Activated naive CD4-positive, alpha-beta T cell treated with anti-CD3 and anti-CD28 coated beads for 36 hours (primary cell): ENCODE measurements at regions of chr1 and their contacts with region 1.

Region 1: GRCh38 chr1:91754348-91754747 is 131.6 kb downstream of the TGFBR3 start:
- DNase-seq: peak; percentile 81
- H3K4me3 Mint-ChIP-seq: no peak overlapping the region
- H3K27ac Mint-ChIP-seq: peak overlapping the region; percentile 70
- H3K4me1 Mint-ChIP-seq: peaks cover 37% of the 10 kb centered on the region
- H3K27me3 Mint-ChIP-seq: peaks cover 4% of the 10 kb centered on the region

Region 2: GRCh38 chr1:89855413-89856123 is 1898.8 kb before region 1 on chr1:
- CTCF ChIA-PET with region 1: no interaction called
- intact Hi-C with region 1: loop called (anchors 1 kb)
- DNase-seq: no peak
- H3K4me3 Mint-ChIP-seq: peak overlapping the region; percentile 44
- H3K27ac Mint-ChIP-seq: no peak overlapping the region
- H3K4me1 Mint-ChIP-seq: peaks cover 11% of the 10 kb centered on the region
- H3K27me3 Mint-ChIP-seq: no peaks in the 10 kb centered on the region

Region 3: DNA sequence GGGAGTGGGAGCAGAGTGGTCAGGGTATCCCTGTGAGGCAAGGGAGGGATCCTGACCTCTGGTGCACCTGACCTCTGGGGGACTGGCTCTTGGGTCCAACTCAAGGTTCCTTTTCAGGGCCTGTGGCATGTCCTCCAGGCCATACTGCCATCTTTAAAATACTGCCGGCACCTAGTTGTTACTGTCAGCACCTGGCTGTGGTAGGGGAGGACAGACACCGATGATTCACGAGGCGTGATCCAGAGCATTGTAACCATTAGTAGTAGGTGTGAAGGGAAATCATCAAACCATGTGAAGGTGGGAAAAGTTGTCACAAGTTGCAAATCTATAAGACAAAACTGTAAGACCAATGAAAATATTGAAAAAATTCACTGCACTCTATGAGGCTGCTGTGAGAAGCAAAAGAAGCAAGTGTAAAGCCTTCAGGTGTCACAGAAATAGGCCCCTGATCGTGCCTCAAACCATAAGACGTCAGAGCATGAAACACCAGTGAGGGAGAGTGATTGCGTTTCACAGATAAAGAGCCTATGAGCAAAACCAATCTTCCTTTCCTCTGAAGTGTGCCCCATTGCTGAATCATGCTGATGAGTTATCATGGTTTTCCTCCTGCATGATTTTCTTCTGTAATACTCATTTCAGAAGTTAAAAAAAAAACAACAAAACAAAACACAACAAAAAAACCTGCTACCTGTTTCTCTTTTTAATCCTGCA is 198.4 kb before region 1 on chr1:
- CTCF ChIA-PET with region 1: no interaction called
- intact Hi-C with region 1: loop called (anchors 1 kb)
- DNase-seq: peak; percentile 84
- H3K4me3 Mint-ChIP-seq: peak overlapping the region; percentile 26
- H3K27ac Mint-ChIP-seq: peak overlapping the region; percentile 90
- H3K4me1 Mint-ChIP-seq: peaks cover 68% of the 10 kb centered on the region
- H3K27me3 Mint-ChIP-seq: no peaks in the 10 kb centered on the region

Region 4: GRCh38 chr1:91697416-91697815 is 56.9 kb before region 1 on chr1:
- CTCF ChIA-PET with region 1: no interaction called
- intact Hi-C with region 1: loop called (anchors 1 kb)
- DNase-seq: peak; percentile 77
- H3K4me3 Mint-ChIP-seq: peak overlapping the region; percentile 30
- H3K27ac Mint-ChIP-seq: peak overlapping the region; percentile 51
- H3K4me1 Mint-ChIP-seq: peaks cover 28% of the 10 kb centered on the region
- H3K27me3 Mint-ChIP-seq: no peaks in the 10 kb centered on the region

Region 5: DNA sequence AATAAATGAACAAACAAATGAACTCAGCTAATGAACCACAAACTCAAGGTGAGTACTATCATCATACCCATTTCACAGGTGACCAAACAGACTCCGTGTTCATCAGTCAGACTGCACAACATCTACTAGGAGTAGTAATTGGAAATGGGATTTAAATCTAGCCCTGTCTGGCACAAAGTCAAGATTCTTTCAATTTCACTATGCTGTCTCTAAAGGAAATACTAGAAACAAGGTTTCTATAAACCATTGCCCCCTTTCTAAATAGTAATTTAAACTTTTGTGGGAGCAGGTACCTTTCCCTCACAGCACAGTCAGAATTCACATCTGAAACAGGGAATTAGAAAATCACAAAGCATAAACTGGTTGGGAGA is 28.7 kb before region 1 on chr1:
- CTCF ChIA-PET with region 1: no interaction called
- intact Hi-C with region 1: no loop called
- DNase-seq: no peak
- H3K4me3 Mint-ChIP-seq: no peak overlapping the region
- H3K27ac Mint-ChIP-seq: no peak overlapping the region
- H3K4me1 Mint-ChIP-seq: peaks cover 6% of the 10 kb centered on the region
- H3K27me3 Mint-ChIP-seq: no peaks in the 10 kb centered on the region

Region 6: DNA sequence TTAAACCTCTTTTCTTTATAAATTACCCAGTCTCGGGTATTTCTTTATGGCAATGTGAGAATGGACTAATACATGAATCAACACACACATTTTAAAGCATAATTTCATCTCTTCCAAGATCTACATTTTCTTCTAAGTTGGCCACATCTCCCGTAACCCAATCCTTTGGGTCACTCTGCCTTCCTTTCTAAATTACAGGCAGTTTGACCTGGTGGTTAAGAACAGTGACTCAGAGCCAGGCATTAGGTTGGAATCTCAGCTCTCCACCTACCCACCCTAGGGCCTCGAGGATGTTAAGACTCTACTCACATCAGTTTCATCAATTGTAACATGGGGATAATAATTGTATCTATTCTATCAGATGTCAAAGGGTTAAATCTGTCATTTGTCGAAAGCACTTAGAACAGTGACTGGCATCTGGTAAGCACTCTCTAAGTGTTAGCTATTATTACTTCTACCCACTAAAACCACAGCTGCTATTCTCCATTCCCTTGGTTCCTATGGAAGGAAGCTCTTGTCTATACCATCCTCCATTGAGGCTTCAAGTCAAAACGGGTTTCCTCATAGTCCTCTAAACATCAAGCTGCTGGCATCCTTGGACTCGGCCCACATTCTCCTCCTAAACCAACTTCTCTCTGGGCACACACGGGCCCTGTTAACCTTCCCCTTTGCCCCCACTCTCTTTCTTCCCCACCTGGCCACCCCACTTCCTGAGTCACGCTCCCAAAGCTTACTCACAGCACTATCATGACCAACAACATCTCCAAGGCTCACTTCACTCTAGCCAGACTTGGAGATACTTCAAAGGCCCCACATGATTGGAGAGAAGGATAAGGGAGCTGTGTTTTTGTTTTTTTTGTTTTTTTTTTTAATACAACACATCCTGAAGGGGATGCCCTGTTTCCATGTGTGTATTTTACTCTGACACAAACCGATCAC is 14.7 kb after region 1 on chr1:
- CTCF ChIA-PET with region 1: no interaction called
- intact Hi-C with region 1: no loop called
- DNase-seq: no peak
- H3K4me3 Mint-ChIP-seq: no peak overlapping the region
- H3K27ac Mint-ChIP-seq: no peak overlapping the region
- H3K4me1 Mint-ChIP-seq: no peaks in the 10 kb centered on the region
- H3K27me3 Mint-ChIP-seq: no peaks in the 10 kb centered on the region

Region 7: GRCh38 chr1:91803847-91804545 is 49.6 kb after region 1 on chr1:
- CTCF ChIA-PET with region 1: interaction called, 3 read pairs
- intact Hi-C with region 1: loop called (anchors 1 kb)
- DNase-seq: peak; percentile 92
- H3K4me3 Mint-ChIP-seq: peak overlapping the region; percentile 60
- H3K27ac Mint-ChIP-seq: peak overlapping the region; percentile 98
- H3K4me1 Mint-ChIP-seq: peaks cover 31% of the 10 kb centered on the region
- H3K27me3 Mint-ChIP-seq: no peaks in the 10 kb centered on the region

Region 8: GRCh38 chr1:91948501-91949355 is 194.4 kb after region 1 on chr1:
- CTCF ChIA-PET with region 1: no interaction called
- intact Hi-C with region 1: no loop called
- DNase-seq: peak; percentile 50
- H3K4me3 Mint-ChIP-seq: peak overlapping the region; percentile 25
- H3K27ac Mint-ChIP-seq: no peak overlapping the region
- H3K4me1 Mint-ChIP-seq: peaks cover 13% of the 10 kb centered on the region
- H3K27me3 Mint-ChIP-seq: no peaks in the 10 kb centered on the region

Region 9: DNA sequence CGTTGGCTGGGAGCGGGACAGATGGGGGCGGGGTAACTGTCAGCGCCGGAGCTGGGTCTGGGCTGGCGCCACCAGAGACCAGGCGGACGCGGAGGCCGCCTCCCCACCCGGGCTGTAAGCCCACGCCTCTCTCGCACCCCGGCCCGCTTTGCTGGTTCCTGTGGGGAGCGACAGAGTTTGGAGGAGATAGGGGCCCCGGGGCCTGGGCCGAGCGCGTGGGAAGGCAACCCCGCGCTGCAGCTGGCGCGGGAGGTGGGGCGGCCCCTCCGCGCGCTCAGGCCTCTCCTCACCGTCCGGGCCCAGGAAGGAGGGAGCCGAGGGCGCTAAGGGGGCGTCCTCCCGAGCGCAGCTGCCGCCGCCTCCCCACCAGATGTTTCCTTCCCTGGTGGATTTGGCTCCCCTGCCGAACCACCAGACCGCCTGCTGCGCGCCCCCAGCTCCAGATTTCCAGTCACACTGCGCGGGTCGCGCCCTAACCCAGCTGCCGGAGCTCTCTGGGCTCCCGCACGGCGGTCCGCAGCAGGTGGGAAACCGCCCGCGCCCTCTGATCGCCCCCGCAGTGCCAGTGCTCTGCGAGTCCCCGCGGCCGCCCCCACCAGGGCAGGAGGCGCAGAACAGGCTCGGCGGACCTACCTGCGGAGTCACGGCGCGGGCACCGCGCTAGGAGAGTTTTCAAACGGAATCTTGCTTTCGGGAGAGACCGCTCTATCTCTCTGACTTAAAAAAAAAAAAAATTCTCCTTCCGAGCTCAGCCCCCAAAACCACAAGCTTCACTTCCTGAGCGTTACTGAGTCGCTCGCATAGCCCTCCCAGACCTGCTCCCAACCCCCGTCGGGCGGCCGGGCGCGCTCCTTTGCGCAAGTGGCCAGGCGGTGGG is 731.3 kb after region 1 on chr1:
- CTCF ChIA-PET with region 1: no interaction called
- intact Hi-C with region 1: loop called (anchors 5 kb)
- DNase-seq: peak; percentile 91
- H3K4me3 Mint-ChIP-seq: peak overlapping the region; percentile 90
- H3K27ac Mint-ChIP-seq: peak overlapping the region; percentile 93
- H3K4me1 Mint-ChIP-seq: peaks cover 38% of the 10 kb centered on the region
- H3K27me3 Mint-ChIP-seq: no peaks in the 10 kb centered on the region

Region 10: GRCh38 chr1:92784639-92785500 is 1030.5 kb after region 1 on chr1 and contains the start of gene EVI5:
- CTCF ChIA-PET with region 1: no interaction called
- intact Hi-C with region 1: no loop called
- DNase-seq: peak; percentile 58
- H3K4me3 Mint-ChIP-seq: peak within 1 kb of the TSS; percentile 73
- H3K27ac Mint-ChIP-seq: no peak within 1 kb of the TSS
- H3K4me1 Mint-ChIP-seq: peaks cover 13% of the 10 kb centered on the region
- H3K27me3 Mint-ChIP-seq: peaks cover 32% of the 10 kb centered on the region
- total RNA-seq, gene EVI5: 13.8 to 14.0 TPM